ENCODE measurements at regions of chr10 and their contacts with region 1.

Region 1: DNA sequence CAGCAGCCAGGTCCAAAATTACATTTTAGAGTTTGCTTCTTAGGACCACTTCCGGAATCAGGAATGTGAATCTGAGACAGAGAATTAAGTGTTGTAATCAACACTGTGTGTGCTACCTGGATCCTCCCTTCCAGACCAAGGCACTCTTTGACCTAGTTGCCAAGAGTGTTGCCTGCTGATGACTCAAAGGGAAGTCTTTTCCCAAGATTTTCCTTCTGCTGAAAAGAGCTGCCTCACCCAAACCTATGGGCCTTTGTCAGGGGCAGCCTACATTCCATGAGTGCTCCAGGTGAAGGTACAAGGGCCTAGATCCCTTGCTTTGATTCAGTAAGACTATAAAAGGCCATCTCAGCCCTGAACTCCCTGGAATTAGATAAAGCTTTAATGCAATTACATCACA is 712.5 kb upstream of the ANKRD30A start:
- DNase-seq: no peak
- H3K4me3 ChIP-seq: no peak overlapping the region
- H3K4me3 Mint-ChIP-seq: no peak overlapping the region
- H3K27ac Mint-ChIP-seq: no peak overlapping the region
- H3K4me1 ChIP-seq: no peaks in the 10 kb centered on the region
- H3K4me1 Mint-ChIP-seq: no peaks in the 10 kb centered on the region
- H3K27me3 ChIP-seq: no peaks in the 10 kb centered on the region
- H3K27me3 Mint-ChIP-seq: no peaks in the 10 kb centered on the region
- CTCF ChIP-seq: no peak

Region 2: GRCh38 chr10:36278176-36278575 is 134.8 kb before region 1 on chr10:
- CTCF ChIA-PET with region 1: no interaction called
- POLR2A ChIA-PET with region 1: no interaction called
- intact Hi-C with region 1: no loop called
- DNase-seq: no peak
- H3K4me3 ChIP-seq: no peak overlapping the region
- H3K4me3 Mint-ChIP-seq: no peak overlapping the region
- H3K27ac Mint-ChIP-seq: no peak overlapping the region
- H3K4me1 ChIP-seq: peaks cover 11% of the 10 kb centered on the region
- H3K4me1 Mint-ChIP-seq: no peaks in the 10 kb centered on the region
- H3K27me3 ChIP-seq: no peaks in the 10 kb centered on the region
- H3K27me3 Mint-ChIP-seq: peaks cover 3% of the 10 kb centered on the region
- CTCF ChIP-seq: no peak

Region 3: GRCh38 chr10:36373424-36374096 is 39.4 kb before region 1 on chr10:
- CTCF ChIA-PET with region 1: no interaction called
- POLR2A ChIA-PET with region 1: no interaction called
- intact Hi-C with region 1: loop called (anchors 1 kb)
- DNase-seq: no peak
- H3K4me3 ChIP-seq: no peak overlapping the region
- H3K4me3 Mint-ChIP-seq: no peak overlapping the region
- H3K27ac Mint-ChIP-seq: no peak overlapping the region
- H3K4me1 ChIP-seq: no peaks in the 10 kb centered on the region
- H3K4me1 Mint-ChIP-seq: no peaks in the 10 kb centered on the region
- H3K27me3 ChIP-seq: no peaks in the 10 kb centered on the region
- H3K27me3 Mint-ChIP-seq: peaks cover 16% of the 10 kb centered on the region
- CTCF ChIP-seq: no peak